Activated CD8-positive, alpha-beta T cell treated with anti-CD3 and anti-CD28 coated beads for 36 hours (primary cell): ENCODE measurements at regions of chr4 and their contacts with region 1.

Region 1: GRCh38 chr4:10123227-10124101 is 6.9 kb upstream of the WDR1 start:
- DNase-seq: peak; percentile 51
- ATAC-seq: peak; percentile 76
- H3K4me3 Mint-ChIP-seq: no peak overlapping the region
- H3K27ac Mint-ChIP-seq: peak overlapping the region; percentile 72
- H3K4me1 Mint-ChIP-seq: peaks cover 58% of the 10 kb centered on the region
- H3K27me3 Mint-ChIP-seq: no peaks in the 10 kb centered on the region
- CTCF ChIP-seq: no peak

Region 2: GRCh38 chr4:10180927-10181782 is 57.7 kb after region 1 on chr4:
- CTCF ChIA-PET with region 1: no interaction called
- POLR2A ChIA-PET with region 1: interaction called, 11 read pairs
- intact Hi-C with region 1: loop called (anchors 5 kb)
- DNase-seq: peak; percentile 61
- ATAC-seq: peak; percentile 94
- H3K4me3 Mint-ChIP-seq: peak overlapping the region; percentile 16
- H3K27ac Mint-ChIP-seq: peak overlapping the region; percentile 93
- H3K4me1 Mint-ChIP-seq: peaks cover 32% of the 10 kb centered on the region
- H3K27me3 Mint-ChIP-seq: no peaks in the 10 kb centered on the region
- CTCF ChIP-seq: no peak

Region 3: GRCh38 chr4:10296730-10297129 is 173.3 kb after region 1 on chr4:
- CTCF ChIA-PET with region 1: no interaction called
- POLR2A ChIA-PET with region 1: no interaction called
- intact Hi-C with region 1: no loop called
- DNase-seq: no peak
- ATAC-seq: no peak
- H3K4me3 Mint-ChIP-seq: no peak overlapping the region
- H3K27ac Mint-ChIP-seq: no peak overlapping the region
- H3K4me1 Mint-ChIP-seq: no peaks in the 10 kb centered on the region
- H3K27me3 Mint-ChIP-seq: peaks cover 2% of the 10 kb centered on the region
- CTCF ChIP-seq: no peak